BJ (cell line): ENCODE measurements at regions of chr17 and their contacts with region 1.

Region 1: DNA sequence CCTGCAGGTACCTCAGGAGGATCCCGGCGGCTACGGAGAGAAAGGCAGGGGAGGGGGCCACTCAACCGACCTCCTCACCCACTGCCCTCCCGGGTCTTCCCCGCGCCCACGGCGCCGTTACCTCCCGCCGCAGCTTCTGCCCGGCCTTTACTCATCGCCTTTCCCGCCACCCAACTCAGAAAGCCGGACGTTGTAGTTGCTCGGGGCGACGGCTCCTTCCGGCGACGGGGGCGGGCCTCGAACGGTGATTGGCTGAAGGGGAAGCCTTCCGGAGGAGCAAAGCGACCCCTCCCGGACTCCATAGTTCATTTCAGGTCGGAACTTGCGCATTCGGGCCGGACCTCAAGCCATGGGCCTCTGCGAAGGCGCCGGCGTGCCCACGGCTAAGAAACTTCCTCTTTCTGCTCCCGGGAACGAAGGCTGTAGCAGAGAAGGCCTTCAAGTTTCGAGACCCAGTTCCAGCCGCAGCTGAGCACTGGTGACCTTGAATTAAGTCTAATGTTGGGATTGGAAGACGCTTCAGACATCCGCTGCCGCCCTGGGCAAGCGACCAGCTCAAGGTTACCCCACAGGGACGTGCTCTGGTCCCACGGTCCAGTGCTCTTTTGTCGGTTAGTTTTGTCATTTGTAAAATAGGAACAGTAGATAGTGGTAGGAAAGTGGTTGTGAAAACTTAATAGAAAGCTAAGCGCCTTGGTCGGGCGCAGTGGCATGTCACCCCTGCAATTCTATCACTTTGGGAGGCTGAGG is at the start of gene PSMC3IP:
- DNase-seq: peak; percentile 79
- H3K4me3 ChIP-seq: peak within 1 kb of the TSS; percentile 46
- H3K27me3 ChIP-seq: no peaks in the 10 kb centered on the region
- CTCF ChIP-seq: peak; percentile 49
- polyA plus RNA-seq, gene PSMC3IP: 3.4 and 5.8 TPM in 2 replicates

Region 2: DNA sequence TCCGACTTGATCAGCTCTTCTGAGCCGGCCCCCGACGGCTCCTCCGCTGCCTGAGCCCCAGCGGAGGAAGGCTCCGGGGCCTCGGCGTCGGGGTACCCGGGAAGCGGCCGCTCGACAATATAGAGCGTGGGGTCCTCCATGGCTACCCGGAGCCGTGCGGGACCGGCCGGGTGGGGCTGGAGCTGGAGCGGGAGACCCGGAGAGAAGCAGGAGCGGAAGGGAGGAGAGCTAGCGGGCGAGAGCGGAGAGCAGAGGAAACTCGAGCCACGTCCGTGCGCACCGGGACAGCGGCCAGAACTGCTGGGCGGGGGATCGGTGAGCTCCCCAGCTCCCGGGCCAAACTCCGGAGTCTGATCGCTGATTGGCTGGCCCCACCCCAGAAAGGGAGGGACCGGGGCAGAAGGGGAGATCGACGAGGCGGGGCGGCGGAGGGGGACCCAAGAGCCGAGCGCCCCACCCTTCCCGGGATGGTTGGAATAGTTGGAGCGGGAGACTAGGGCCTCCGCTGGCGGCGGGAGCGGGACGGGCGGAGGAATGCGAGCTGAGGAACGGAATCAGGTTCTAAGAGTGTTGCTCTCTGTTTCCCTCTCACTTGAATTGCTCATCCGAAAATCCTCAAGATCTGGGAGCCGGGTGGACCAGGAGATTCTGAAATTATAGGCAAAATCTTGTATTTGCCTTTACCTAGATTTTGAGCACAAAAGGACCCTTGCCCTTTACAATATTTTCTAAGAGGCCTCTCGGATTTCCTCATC is 154.6 kb before region 1 on chr17 and contains the start of gene CAVIN1:
- CTCF ChIA-PET with region 1: no interaction called
- POLR2A ChIA-PET with region 1: no interaction called
- DNase-seq: peak; percentile 91
- H3K4me3 ChIP-seq: peak within 1 kb of the TSS; percentile 64
- H3K27me3 ChIP-seq: no peaks in the 10 kb centered on the region
- CTCF ChIP-seq: no peak
- polyA plus RNA-seq, gene CAVIN1: 607 and 734 TPM in 2 replicates

Region 3: GRCh38 chr17:42546991-42547481 is 30.7 kb before region 1 on chr17:
- CTCF ChIA-PET with region 1: no interaction called
- POLR2A ChIA-PET with region 1: no interaction called
- DNase-seq: no peak
- H3K4me3 ChIP-seq: no peak overlapping the region
- H3K27me3 ChIP-seq: no peaks in the 10 kb centered on the region
- CTCF ChIP-seq: no peak

Region 4: GRCh38 chr17:42566883-42567573 is 10.7 kb before region 1 on chr17 and contains the start of gene MLX:
- CTCF ChIA-PET with region 1: interaction called, 11 read pairs
- POLR2A ChIA-PET with region 1: no interaction called
- DNase-seq: peak; percentile 39
- H3K4me3 ChIP-seq: peak within 1 kb of the TSS; percentile 97
- H3K27me3 ChIP-seq: no peaks in the 10 kb centered on the region
- CTCF ChIP-seq: no peak
- polyA plus RNA-seq, gene MLX: 40.9 and 50.1 TPM in 2 replicates

Region 5: GRCh38 chr17:42598905-42599304 is 21.2 kb after region 1 on chr17:
- CTCF ChIA-PET with region 1: interaction called, 20 read pairs
- POLR2A ChIA-PET with region 1: no interaction called
- DNase-seq: no peak
- H3K4me3 ChIP-seq: no peak overlapping the region
- H3K27me3 ChIP-seq: no peaks in the 10 kb centered on the region
- CTCF ChIP-seq: no peak

Region 6: GRCh38 chr17:42667123-42667951 is 89.6 kb after region 1 on chr17:
- CTCF ChIA-PET with region 1: interaction called, 30 read pairs
- POLR2A ChIA-PET with region 1: no interaction called
- DNase-seq: no peak
- H3K4me3 ChIP-seq: no peak overlapping the region
- H3K27me3 ChIP-seq: no peaks in the 10 kb centered on the region
- CTCF ChIP-seq: no peak

Region 7: DNA sequence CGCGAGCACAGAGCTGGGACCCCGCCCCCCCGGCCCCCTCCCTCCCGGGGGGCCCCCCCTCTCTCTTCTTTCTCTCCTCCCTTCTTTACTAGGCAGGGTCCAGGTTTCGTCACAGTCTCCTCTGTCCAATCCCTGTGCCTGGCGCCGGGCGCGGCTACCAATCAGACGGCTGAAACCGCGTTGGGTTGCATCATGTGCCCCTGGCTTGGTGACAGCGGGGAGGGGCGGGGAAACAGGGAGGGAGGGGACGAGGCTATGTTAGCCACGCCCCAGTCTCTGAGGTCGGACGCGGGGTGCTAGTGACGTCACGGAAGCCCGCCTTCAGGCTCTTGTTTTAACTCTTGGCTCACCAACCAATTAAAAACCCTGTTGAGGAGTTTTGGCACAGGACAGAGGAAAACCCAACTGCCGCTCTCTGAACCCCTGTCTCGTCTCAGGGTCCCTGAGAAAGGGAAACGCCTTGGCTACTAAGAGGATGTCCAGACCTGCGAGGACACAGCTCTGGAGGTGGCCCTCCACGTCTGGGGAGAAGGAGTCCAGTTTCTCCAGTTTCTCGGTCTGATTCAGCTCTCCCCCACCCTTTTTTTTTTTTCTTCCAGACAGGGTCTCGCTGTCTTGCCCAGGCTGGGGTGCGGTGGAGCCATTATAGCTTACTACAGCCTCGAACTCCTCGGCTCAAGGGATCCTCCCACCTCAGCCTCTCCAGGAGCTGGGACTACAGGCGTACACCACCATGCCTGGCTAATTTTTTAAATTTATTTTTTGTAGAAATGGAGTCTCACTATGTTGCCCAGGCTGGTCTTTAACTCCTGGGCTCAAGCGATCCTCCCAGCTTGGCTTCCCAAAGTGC is 99.5 kb after region 1 on chr17:
- CTCF ChIA-PET with region 1: interaction called, 56 read pairs
- POLR2A ChIA-PET with region 1: no interaction called
- DNase-seq: peak; percentile 95
- H3K4me3 ChIP-seq: peak overlapping the region; percentile 83
- H3K27me3 ChIP-seq: no peaks in the 10 kb centered on the region
- CTCF ChIP-seq: no peak

Region 8: GRCh38 chr17:42760652-42761581 is 183.2 kb after region 1 on chr17 and contains the start of gene RAMP2:
- CTCF ChIA-PET with region 1: interaction called, 32 read pairs
- POLR2A ChIA-PET with region 1: no interaction called
- DNase-seq: no peak
- H3K4me3 ChIP-seq: peak within 1 kb of the TSS; percentile 38
- H3K27me3 ChIP-seq: peaks cover 16% of the 10 kb centered on the region
- CTCF ChIP-seq: no peak
- polyA plus RNA-seq, gene RAMP2: 1.7 and 2.8 TPM in 2 replicates